ENCODE measurements at regions of chr7 and their contacts with region 1.

Region 1: DNA sequence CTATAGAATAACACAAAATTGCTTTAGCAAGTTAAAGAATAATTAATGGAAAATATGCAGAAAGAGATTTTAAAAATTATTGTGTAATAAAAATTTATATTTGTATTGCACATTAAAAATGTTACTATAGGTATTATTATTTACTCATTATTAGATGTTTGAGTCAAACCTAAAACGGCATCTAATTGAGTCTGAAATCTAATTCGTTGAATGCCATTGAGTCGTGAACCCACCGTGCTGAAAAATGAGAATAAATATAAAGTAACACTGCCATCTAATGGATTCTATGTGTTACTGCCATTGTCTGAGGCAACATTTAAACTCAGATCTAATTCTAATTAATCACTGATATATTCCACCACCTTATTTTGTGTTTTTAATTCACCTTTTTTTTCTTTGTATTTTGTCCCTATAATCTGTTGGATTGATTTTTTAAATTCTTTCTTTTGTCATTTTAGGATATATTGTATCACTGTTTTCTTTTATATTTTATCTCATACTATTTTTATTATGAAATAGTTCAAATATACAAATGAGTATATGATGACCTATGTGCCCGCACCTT is 62.2 kb downstream of the SAMD9 start:
- DNase-seq: no peak
- ATAC-seq: peak; percentile 83
- H3K4me3 ChIP-seq: no peak overlapping the region
- H3K27ac ChIP-seq: no peak overlapping the region
- H3K4me1 ChIP-seq: no peaks in the 10 kb centered on the region
- H3K27me3 ChIP-seq: no peaks in the 10 kb centered on the region
- CTCF ChIP-seq: peak; percentile 39 to 73 (median 57); a peak in 5 of 6 replicates
- EP300 ChIP-seq: no peak
- POLR2A ChIP-seq: no peak
- RAD21 ChIP-seq: peak; percentile 86

Region 2: GRCh38 chr7:92421676-92422435 is 633.8 kb before region 1 on chr7:
- CTCF ChIA-PET with region 1: interaction called, 3 read pairs
- POLR2A ChIA-PET with region 1: no interaction called
- RAD21 ChIA-PET with region 1: no interaction called
- SMC1A ChIA-PET with region 1: interaction called, 3 read pairs
- in situ Hi-C with region 1: loop called (anchors 10 kb)
- intact Hi-C with region 1: loop called (anchors 2 kb)
- DNase-seq: no peak
- ATAC-seq: no peak
- H3K4me3 ChIP-seq: no peak overlapping the region
- H3K27ac ChIP-seq: no peak overlapping the region
- H3K4me1 ChIP-seq: peaks cover 5% of the 10 kb centered on the region; the same call in 1 of the 2 replicates
- H3K27me3 ChIP-seq: no peaks in the 10 kb centered on the region
- CTCF ChIP-seq: no peak
- EP300 ChIP-seq: no peak
- POLR2A ChIP-seq: no peak
- RAD21 ChIP-seq: no peak

Region 3: DNA sequence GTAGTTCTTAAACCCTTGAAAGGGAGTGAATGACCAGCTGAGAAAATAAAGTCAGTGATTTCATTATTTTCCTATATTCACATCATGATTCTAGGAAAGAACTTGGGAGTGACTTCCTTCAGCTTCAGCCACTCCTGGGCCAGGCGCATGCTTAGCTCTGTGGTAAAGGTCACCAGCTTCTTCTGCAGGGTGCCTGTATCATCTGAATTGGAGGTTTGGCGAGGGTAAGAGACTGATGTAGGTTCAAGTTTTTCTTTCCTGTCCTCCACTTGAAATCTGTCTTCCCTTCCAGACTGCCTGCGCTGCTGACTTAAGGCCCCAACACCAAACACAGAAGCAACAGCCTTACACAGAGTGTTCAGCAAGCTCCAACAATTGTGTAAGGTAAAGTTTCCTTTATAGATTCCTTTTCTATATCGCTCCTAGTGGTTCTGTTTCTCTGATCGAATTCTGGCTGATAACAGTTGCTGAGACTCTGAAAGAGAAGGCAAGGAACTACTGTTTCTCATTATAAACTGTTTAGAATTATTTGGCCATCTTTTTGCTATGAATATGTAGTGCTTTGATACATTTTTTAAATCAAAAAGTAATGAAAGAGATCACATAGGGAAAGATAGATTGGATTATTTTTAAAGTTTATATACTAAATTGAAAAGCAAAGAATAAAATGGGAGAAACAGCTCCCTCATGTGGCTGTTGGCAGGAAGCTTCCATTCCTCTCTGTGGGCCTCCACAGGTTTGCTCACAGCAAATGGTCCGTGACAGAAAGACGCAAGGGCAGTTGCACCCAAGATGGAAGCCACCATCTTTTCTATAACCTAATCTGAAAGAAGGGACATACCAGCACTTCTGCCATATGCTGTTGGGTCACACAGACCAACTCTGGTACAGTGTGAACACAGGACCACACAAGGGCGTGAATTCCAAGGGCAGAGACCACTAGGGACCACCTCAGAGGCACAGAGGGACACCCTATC is 594.3 kb before region 1 on chr7:
- CTCF ChIA-PET with region 1: no interaction called
- POLR2A ChIA-PET with region 1: no interaction called
- RAD21 ChIA-PET with region 1: no interaction called
- SMC1A ChIA-PET with region 1: no interaction called
- in situ Hi-C with region 1: no loop called
- intact Hi-C with region 1: loop called (anchors 10 kb)
- DNase-seq: no peak
- ATAC-seq: peak; percentile 99
- H3K4me3 ChIP-seq: no peak overlapping the region
- H3K27ac ChIP-seq: no peak overlapping the region
- H3K4me1 ChIP-seq: no peaks in the 10 kb centered on the region
- H3K27me3 ChIP-seq: no peaks in the 10 kb centered on the region
- CTCF ChIP-seq: peak; percentile 67 to 78 (median 69)
- EP300 ChIP-seq: no peak
- POLR2A ChIP-seq: no peak
- RAD21 ChIP-seq: peak; percentile 49

Region 4: GRCh38 chr7:92691578-92691977 is 364.0 kb before region 1 on chr7:
- CTCF ChIA-PET with region 1: interaction called, 5 read pairs
- POLR2A ChIA-PET with region 1: no interaction called
- RAD21 ChIA-PET with region 1: no interaction called
- SMC1A ChIA-PET with region 1: no interaction called
- in situ Hi-C with region 1: loop called (anchors 10 kb)
- intact Hi-C with region 1: loop called (anchors 1 kb)
- DNase-seq: peak; percentile 37
- ATAC-seq: peak; percentile 96
- H3K4me3 ChIP-seq: no peak overlapping the region
- H3K27ac ChIP-seq: no peak overlapping the region
- H3K4me1 ChIP-seq: no peaks in the 10 kb centered on the region
- H3K27me3 ChIP-seq: no peaks in the 10 kb centered on the region
- CTCF ChIP-seq: peak; percentile 45 to 60 (median 58); a peak in 5 of 6 replicates
- EP300 ChIP-seq: no peak
- POLR2A ChIP-seq: no peak
- RAD21 ChIP-seq: peak; percentile 86

Region 5: GRCh38 chr7:92880212-92881090 is 175.2 kb before region 1 on chr7:
- CTCF ChIA-PET with region 1: interaction called, 3 read pairs
- POLR2A ChIA-PET with region 1: no interaction called
- RAD21 ChIA-PET with region 1: no interaction called
- SMC1A ChIA-PET with region 1: no interaction called
- in situ Hi-C with region 1: no loop called
- intact Hi-C with region 1: loop called (anchors 1 kb)
- DNase-seq: no peak
- ATAC-seq: peak; percentile 83
- H3K4me3 ChIP-seq: no peak overlapping the region
- H3K27ac ChIP-seq: no peak overlapping the region
- H3K4me1 ChIP-seq: no peaks in the 10 kb centered on the region
- H3K27me3 ChIP-seq: no peaks in the 10 kb centered on the region
- CTCF ChIP-seq: peak in 2 of 3 experiments; percentile 20 to 31; a peak in 3 of 6 replicates
- EP300 ChIP-seq: no peak
- POLR2A ChIP-seq: no peak
- RAD21 ChIP-seq: peak; percentile 56